ENCODE measurements at regions of chr7 and their contacts with region 1.

Region 1: GRCh38 chr7:135335628-135336139 is 102.0 kb downstream of the STRA8 start:
- DNase-seq: peak in 15 of 35 experiments; percentile 1 to 40 (median 7)
- ATAC-seq: peak in 1 of 4 experiments; percentile 47
- H3K4me3 ChIP-seq: no peak overlapping the region
- H3K4me3 Mint-ChIP-seq: no peak overlapping the region
- H3K27ac ChIP-seq: no peak overlapping the region
- H3K27ac Mint-ChIP-seq: no peak overlapping the region
- H3K4me1 ChIP-seq: no peaks in the 10 kb centered on the region
- H3K4me1 Mint-ChIP-seq: no peaks in the 10 kb centered on the region
- H3K27me3 ChIP-seq: peaks cover 0 to 4% of the 10 kb centered on the region in 2 experiments
- H3K27me3 Mint-ChIP-seq: no peaks in the 10 kb centered on the region

Region 2: GRCh38 chr7:135281363-135281949 is 54.2 kb before region 1 on chr7:
- CTCF ChIA-PET with region 1: interaction called in 1 of 2 experiments, 18 read pairs
- POLR2A ChIA-PET with region 1: no interaction called
- DNase-seq: peak; percentile 36 to 89 (median 69)
- ATAC-seq: peak; percentile 92 to 100 (median 94)
- H3K4me3 ChIP-seq: no peak overlapping the region
- H3K4me3 Mint-ChIP-seq: no peak overlapping the region
- H3K27ac ChIP-seq: no peak overlapping the region
- H3K27ac Mint-ChIP-seq: peak overlapping the region in 1 of 2 donors; percentile 20
- H3K4me1 ChIP-seq: peaks cover 3 to 6% of the 10 kb centered on the region in 2 experiments
- H3K4me1 Mint-ChIP-seq: peaks cover 0 to 23% (median 21%) of the 10 kb centered on the region in 3 donors
- H3K27me3 ChIP-seq: peaks cover 0 to 2% of the 10 kb centered on the region in 2 experiments
- H3K27me3 Mint-ChIP-seq: peaks cover 8 to 12% of the 10 kb centered on the region in 2 donors